ENCODE measurements at regions of chr9 and their contacts with region 1.

Region 1: GRCh38 chr9:20044686-20045085 is 255.8 kb upstream of the SLC24A2 start:
- DNase-seq: no peak
- H3K27ac ChIP-seq: no peak overlapping the region
- CTCF ChIP-seq: no peak

Region 2: DNA sequence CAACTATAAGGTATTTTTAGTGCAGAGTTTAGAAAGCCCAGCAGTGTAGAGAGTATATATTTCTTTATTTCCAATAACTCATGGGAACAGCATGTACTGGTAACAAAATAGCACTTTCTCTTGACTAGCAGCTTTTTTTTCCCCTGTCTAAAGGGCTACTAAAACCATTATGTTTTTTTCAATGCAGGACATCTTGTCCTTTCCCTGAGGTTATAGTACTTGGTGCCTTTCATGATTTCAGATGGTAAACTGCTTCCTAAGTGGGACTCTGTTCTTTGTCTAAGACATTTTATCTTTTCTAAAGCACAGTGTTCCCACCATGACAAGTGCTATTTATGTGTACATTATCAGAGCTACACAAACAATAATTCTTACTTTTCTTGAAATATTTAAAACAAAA is 378.1 kb before region 1 on chr9:
- CTCF ChIA-PET with region 1: interaction called, 10 read pairs
- POLR2A ChIA-PET with region 1: no interaction called
- DNase-seq: no peak
- H3K27ac ChIP-seq: no peak overlapping the region
- CTCF ChIP-seq: no peak

Measured in RWPE1 (cell line).